ENCODE measurements at regions of chr1 and their contacts with region 1.

Region 1: GRCh38 chr1:155001675-155002463 is 733 bp upstream of the ZBTB7B start:
- DNase-seq: peak; percentile 100
- H3K4me3 Mint-ChIP-seq: peak overlapping the region; percentile 94
- H3K27ac Mint-ChIP-seq: peak overlapping the region; percentile 95
- H3K4me1 Mint-ChIP-seq: peaks cover 50% of the 10 kb centered on the region
- H3K27me3 Mint-ChIP-seq: no peaks in the 10 kb centered on the region

Region 2: GRCh38 chr1:154335025-154335714 is 666.7 kb before region 1 on chr1:
- CTCF ChIA-PET with region 1: no interaction called
- POLR2A ChIA-PET with region 1: no interaction called
- intact Hi-C with region 1: loop called (anchors 10 kb)
- DNase-seq: peak; percentile 94
- H3K4me3 Mint-ChIP-seq: no peak overlapping the region
- H3K27ac Mint-ChIP-seq: peak overlapping the region; percentile 79
- H3K4me1 Mint-ChIP-seq: peaks cover 66% of the 10 kb centered on the region
- H3K27me3 Mint-ChIP-seq: no peaks in the 10 kb centered on the region

Region 3: GRCh38 chr1:154955718-154956543 is 45.9 kb before region 1 on chr1 and contains the start of gene PBXIP1:
- CTCF ChIA-PET with region 1: interaction called, 38 read pairs
- POLR2A ChIA-PET with region 1: interaction called, 23 read pairs
- intact Hi-C with region 1: loop called (anchors 1 kb)
- DNase-seq: peak; percentile 89
- H3K4me3 Mint-ChIP-seq: peak within 1 kb of the TSS; percentile 92
- H3K27ac Mint-ChIP-seq: peak within 1 kb of the TSS; percentile 97
- H3K4me1 Mint-ChIP-seq: peaks cover 75% of the 10 kb centered on the region
- H3K27me3 Mint-ChIP-seq: no peaks in the 10 kb centered on the region
- total RNA-seq, gene PBXIP1: 55.9 to 57.3 TPM

Region 4: GRCh38 chr1:154982897-154983648 is 18.8 kb before region 1 on chr1 and contains the start of gene FLAD1:
- CTCF ChIA-PET with region 1: interaction called, 82 read pairs
- POLR2A ChIA-PET with region 1: interaction called, 21 read pairs
- intact Hi-C with region 1: loop called (anchors 1 kb)
- DNase-seq: peak; percentile 98
- H3K4me3 Mint-ChIP-seq: no peak within 1 kb of the TSS
- H3K27ac Mint-ChIP-seq: no peak within 1 kb of the TSS
- H3K4me1 Mint-ChIP-seq: peaks cover 14% of the 10 kb centered on the region
- H3K27me3 Mint-ChIP-seq: no peaks in the 10 kb centered on the region
- total RNA-seq, gene FLAD1: 45.4 to 49.4 TPM

Region 5: GRCh38 chr1:155037851-155038441 is 36.1 kb after region 1 on chr1:
- CTCF ChIA-PET with region 1: no interaction called
- POLR2A ChIA-PET with region 1: no interaction called
- intact Hi-C with region 1: no loop called
- DNase-seq: no peak
- H3K4me3 Mint-ChIP-seq: no peak overlapping the region
- H3K27ac Mint-ChIP-seq: no peak overlapping the region
- H3K4me1 Mint-ChIP-seq: no peaks in the 10 kb centered on the region
- H3K27me3 Mint-ChIP-seq: peaks cover 2% of the 10 kb centered on the region

Region 6: DNA sequence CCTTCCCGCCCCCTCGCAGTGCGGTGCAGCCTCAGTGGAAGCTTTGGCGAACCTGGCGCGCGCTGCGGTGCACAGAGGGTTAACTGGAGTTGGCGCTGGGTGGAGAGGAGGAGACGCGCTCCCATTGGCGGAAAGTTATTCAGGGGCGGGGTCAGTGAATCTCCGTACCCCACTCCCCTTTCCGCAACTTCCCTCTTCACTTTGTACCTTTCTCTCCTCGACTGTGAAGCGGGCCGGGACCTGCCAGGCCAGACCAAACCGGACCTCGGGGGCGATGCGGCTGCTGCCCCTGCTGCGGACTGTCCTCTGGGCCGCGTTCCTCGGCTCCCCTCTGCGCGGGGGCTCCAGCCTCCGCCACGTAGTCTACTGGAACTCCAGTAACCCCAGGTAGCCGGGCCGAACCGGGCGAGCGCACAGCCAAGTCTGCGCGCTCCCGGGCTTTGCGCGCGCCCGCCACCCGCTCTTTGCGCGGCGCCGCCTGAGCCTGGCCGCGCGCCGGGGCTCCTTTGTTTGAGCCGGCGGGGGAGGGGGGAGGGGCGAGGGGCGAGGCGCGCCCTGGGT is 61.8 kb after region 1 on chr1 and contains the start of gene EFNA4:
- CTCF ChIA-PET with region 1: interaction called, 11 read pairs
- POLR2A ChIA-PET with region 1: no interaction called
- intact Hi-C with region 1: no loop called
- DNase-seq: peak; percentile 89
- H3K4me3 Mint-ChIP-seq: peak within 1 kb of the TSS; percentile 80
- H3K27ac Mint-ChIP-seq: peak within 1 kb of the TSS; percentile 31
- H3K4me1 Mint-ChIP-seq: peaks cover 29% of the 10 kb centered on the region
- H3K27me3 Mint-ChIP-seq: no peaks in the 10 kb centered on the region
- total RNA-seq, gene EFNA4: 5.0 to 6.1 TPM

Region 7: DNA sequence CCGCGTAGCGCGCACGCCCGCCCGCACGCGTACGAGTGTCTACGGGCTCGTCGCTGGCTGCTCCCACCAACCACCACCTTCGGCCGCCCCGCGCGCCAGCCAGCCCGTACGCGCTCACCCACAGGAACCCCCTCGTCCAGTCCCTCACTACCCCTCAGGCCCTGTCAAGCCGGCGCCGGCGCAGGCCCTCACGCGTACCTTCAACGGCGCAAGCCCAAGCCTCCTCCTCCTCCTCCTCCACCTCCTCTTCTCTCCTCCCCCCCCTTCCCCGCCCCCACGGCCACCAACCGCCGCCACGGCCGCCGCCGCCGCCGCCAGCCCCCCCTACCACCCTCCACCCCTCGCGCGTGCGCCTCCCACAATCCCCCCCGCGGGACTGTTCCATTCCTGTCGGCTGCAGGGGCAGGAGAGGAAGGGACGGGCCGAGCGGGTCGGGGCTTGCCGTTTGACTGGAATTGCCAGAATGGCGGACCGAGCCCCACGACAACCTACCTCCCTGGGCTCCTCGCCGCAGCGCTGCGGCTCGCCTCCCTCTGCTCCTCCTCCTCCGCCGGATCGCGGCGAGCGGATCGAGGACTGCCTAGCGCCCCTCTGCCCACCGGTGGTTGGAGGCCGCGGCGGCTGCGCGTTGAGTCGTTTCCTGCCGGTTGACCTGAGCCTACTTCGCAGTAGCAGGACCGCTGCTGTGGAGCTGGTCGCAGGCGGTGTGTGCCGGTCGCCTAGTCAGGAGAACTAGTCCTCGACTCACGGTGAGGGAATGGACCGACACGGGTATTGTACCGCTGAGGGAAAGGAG is 560.9 kb after region 1 on chr1 and contains the start of gene ASH1L:
- CTCF ChIA-PET with region 1: no interaction called
- POLR2A ChIA-PET with region 1: no interaction called
- intact Hi-C with region 1: loop called (anchors 2 kb)
- DNase-seq: peak; percentile 95
- H3K4me3 Mint-ChIP-seq: peak within 1 kb of the TSS; percentile 99
- H3K27ac Mint-ChIP-seq: peak within 1 kb of the TSS; percentile 98
- H3K4me1 Mint-ChIP-seq: peaks cover 46% of the 10 kb centered on the region
- H3K27me3 Mint-ChIP-seq: no peaks in the 10 kb centered on the region
- total RNA-seq, gene ASH1L: 28.8 to 29.6 TPM